ENCODE measurements at regions of chr10 and their contacts with region 1.

Region 1: DNA sequence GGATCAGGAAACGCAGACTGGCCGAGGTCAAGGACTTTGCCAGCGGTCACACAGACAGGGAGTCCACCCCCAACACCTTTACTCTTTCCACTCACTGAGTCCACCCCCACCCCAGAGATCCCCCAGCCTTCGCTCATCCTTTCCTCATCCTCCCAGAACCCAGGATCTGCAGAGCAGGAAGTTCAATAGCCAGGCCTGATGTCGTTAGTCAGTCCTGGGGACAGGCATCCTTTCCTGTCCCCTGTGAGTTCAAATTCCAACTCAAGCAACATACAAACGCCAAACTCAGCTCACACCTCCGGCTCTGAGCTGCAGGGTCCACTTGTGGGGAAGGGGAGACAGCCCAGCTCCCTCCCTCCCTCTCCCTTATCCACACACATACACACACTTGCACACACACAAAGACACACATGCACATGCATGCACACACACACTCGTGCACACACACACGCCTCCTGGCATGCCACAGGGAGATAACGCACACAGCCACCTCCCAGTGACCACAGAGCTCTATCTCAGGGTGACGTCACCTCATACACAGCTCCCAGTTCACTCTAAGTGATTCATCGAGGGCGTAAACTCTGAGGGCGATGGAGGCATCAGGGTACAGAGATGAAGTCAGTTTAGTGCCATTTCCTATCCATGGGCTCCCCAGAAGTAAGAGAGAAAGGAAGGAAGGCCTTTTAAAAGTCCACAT is 23.9 kb downstream of the CALML3 start:
- DNase-seq: no peak
- ATAC-seq: peak; percentile 68

Region 2: DNA sequence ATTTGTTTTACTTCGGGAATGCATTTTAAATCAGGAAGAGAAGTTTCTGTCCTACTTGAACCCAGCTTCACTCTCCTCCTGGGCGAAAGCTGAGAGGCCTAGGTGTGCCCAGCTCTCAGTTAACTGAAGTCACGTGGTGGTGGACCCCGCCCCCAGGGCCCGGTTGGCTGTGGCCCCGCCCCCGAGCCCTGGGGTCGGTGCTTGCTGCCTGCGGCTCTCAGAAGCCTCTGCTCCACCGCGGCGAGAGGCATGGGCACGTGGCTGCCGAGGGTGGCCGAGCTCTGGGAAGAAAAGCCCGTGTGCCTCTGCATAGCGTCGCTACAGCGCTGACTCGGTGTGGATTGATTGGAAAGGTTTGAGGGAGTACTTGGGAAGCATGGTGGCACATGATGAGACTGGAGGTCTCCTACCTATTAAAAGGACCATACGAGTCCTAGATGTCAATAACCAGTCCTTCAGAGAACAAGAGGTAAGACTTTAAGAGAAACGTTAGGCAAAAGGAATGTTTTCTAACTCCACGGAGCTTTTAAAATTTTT is 102.2 kb before region 1 on chr10:
- intact Hi-C with region 1: loop called (anchors 5 kb)
- DNase-seq: peak; percentile 95
- ATAC-seq: peak; percentile 96

Measured in Right ventricle myocardium inferior (tissue), 1 donor.